ENCODE measurements at regions of chr4 and their contacts with region 1.

Region 1: GRCh38 chr4:152735396-152735859 is 44.1 kb downstream of the TIGD4 start:
- DNase-seq: no peak
- ATAC-seq: no peak
- H3K4me3 Mint-ChIP-seq: no peak overlapping the region
- H3K27ac Mint-ChIP-seq: no peak overlapping the region
- H3K4me1 Mint-ChIP-seq: peaks cover 14% of the 10 kb centered on the region
- H3K27me3 Mint-ChIP-seq: peaks cover 2% of the 10 kb centered on the region
- CTCF ChIP-seq: peak; percentile 24

Region 2: DNA sequence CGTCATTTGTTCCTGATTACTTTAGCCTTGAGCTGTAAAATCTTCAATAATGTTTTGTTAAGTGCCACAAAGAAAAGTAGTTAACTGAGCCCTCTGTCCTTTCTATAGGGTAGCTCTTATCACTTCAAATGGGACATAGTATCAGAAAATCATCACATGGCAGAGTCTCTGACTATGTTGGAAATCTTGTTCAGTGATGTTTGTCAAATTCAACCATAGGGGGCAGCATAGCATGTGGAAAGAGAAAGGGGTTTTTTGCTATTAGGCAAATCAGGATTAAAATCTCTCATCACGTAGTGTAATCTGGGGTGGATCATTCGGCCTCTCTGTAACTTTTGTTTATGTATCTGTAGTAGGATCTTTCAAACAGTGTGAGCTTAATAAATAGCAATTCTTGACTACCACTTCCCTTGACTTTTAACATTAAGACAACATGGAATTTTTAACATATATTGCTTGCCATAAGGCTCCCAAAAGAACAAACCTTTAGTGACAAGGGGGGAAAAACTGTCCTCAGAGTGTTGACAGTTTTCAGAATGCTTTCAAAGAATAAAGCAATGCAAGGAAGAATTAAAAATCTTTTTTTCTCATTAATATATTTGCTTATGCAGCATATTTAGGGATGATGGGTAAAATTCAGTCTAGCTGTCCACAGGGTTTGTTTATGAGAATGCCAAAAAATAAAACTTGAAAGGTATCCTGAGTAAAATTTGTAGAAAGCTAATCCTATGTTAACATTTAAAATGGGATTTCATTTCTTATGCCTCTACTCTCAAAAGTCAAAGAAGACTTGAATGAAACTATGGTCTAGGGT is 326.7 kb before region 1 on chr4:
- CTCF ChIA-PET with region 1: interaction called, 23 read pairs
- POLR2A ChIA-PET with region 1: no interaction called
- intact Hi-C with region 1: loop called (anchors 1 kb)
- DNase-seq: no peak
- ATAC-seq: no peak
- H3K4me3 Mint-ChIP-seq: no peak overlapping the region
- H3K27ac Mint-ChIP-seq: no peak overlapping the region
- H3K4me1 Mint-ChIP-seq: peaks cover 5% of the 10 kb centered on the region
- H3K27me3 Mint-ChIP-seq: no peaks in the 10 kb centered on the region
- CTCF ChIP-seq: no peak

Region 3: GRCh38 chr4:152454398-152455011 is 280.9 kb before region 1 on chr4:
- CTCF ChIA-PET with region 1: interaction called, 17 read pairs
- POLR2A ChIA-PET with region 1: no interaction called
- intact Hi-C with region 1: loop called (anchors 1 kb)
- DNase-seq: no peak
- ATAC-seq: no peak
- H3K4me3 Mint-ChIP-seq: no peak overlapping the region
- H3K27ac Mint-ChIP-seq: peak overlapping the region; percentile 41
- H3K4me1 Mint-ChIP-seq: peaks cover 50% of the 10 kb centered on the region
- H3K27me3 Mint-ChIP-seq: no peaks in the 10 kb centered on the region
- CTCF ChIP-seq: no peak

Region 4: DNA sequence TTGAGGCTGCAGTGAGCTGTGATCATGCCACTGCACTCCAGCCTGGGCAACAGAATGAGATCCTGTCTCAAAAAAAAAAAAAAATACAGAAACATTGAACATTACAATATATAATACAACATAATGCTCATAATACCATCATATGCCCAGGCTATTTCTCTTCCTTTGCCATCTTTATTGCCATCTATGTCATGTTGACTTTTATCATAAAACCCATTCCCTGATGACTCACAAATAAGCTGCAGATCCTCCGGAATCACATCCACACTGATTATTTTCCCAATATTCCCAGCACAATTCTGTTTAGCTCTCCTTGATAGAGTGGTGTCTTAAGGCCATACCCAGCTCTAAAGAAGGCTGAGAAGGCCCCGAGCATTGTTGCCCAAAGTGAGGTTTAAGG is 190.3 kb before region 1 on chr4:
- CTCF ChIA-PET with region 1: no interaction called
- POLR2A ChIA-PET with region 1: no interaction called
- intact Hi-C with region 1: no loop called
- DNase-seq: no peak
- ATAC-seq: no peak
- H3K4me3 Mint-ChIP-seq: no peak overlapping the region
- H3K27ac Mint-ChIP-seq: no peak overlapping the region
- H3K4me1 Mint-ChIP-seq: peaks cover 6% of the 10 kb centered on the region
- H3K27me3 Mint-ChIP-seq: no peaks in the 10 kb centered on the region
- CTCF ChIP-seq: no peak

Region 5: GRCh38 chr4:152696764-152697261 is 38.6 kb before region 1 on chr4:
- CTCF ChIA-PET with region 1: no interaction called
- POLR2A ChIA-PET with region 1: no interaction called
- intact Hi-C with region 1: loop called (anchors 2 kb)
- DNase-seq: no peak
- ATAC-seq: peak; percentile 95
- H3K4me3 Mint-ChIP-seq: peak overlapping the region; percentile 6
- H3K27ac Mint-ChIP-seq: peak overlapping the region; percentile 60
- H3K4me1 Mint-ChIP-seq: peaks cover 40% of the 10 kb centered on the region
- H3K27me3 Mint-ChIP-seq: peaks cover 1% of the 10 kb centered on the region
- CTCF ChIP-seq: no peak